ENCODE measurements at regions of chr20 and their contacts with region 1.

Region 1: GRCh38 chr20:40442181-40442963 is 246.7 kb downstream of the MAFB start:
- DNase-seq: no peak
- H3K4me3 ChIP-seq: no peak overlapping the region
- H3K4me1 ChIP-seq: no peaks in the 10 kb centered on the region
- H3K27me3 ChIP-seq: no peaks in the 10 kb centered on the region

Region 2: GRCh38 chr20:40339661-40340449 is 102.5 kb before region 1 on chr20:
- in situ Hi-C with region 1: loop called (anchors 25 kb)
- DNase-seq: no peak
- H3K4me3 ChIP-seq: no peak overlapping the region
- H3K4me1 ChIP-seq: no peaks in the 10 kb centered on the region
- H3K27me3 ChIP-seq: no peaks in the 10 kb centered on the region

Measured in HAP-1 (cell line).